A673 (cell line): ENCODE measurements at regions of chr20 and their contacts with region 1.

Region 1: DNA sequence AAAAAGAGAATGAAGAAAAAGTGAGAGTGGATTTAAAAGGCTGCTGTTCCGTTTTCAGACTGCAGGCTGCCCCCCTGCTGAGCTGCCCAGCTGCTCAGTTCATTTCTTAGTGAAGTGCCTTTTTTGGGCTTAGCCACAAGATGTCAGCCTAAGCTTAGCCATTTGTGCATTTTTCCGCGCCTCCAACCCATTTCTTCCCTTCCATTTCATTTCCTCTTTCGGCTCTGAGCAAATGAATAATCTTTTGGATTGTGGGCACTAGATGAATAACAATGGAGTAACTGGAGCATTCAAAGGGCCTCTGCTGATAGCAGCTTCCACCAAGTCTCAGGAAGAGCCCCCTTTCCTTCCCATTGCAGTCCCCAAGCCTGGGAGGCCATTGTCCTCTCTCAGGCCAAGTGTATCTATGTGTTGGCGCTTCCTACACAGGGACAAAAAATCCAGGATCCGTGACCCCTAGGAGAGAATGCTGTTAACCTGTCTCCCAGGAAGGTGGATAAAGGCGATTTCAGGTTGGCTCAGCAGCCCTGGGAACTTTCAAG is 83.5 kb upstream of the SPTLC3 start:
- DNase-seq: peak; percentile 88
- H3K4me3 ChIP-seq: no peak overlapping the region
- H3K27ac ChIP-seq: no peak overlapping the region
- H3K4me1 ChIP-seq: peaks cover 4% of the 10 kb centered on the region
- H3K27me3 ChIP-seq: no peaks in the 10 kb centered on the region
- CTCF ChIP-seq: peak; percentile 87

Region 2: GRCh38 chr20:12970372-12970821 is 45.1 kb after region 1 on chr20:
- CTCF ChIA-PET with region 1: interaction called, 3 read pairs
- POLR2A ChIA-PET with region 1: no interaction called
- intact Hi-C with region 1: loop called (anchors 2 kb)
- DNase-seq: peak; percentile 50
- H3K4me3 ChIP-seq: no peak overlapping the region
- H3K27ac ChIP-seq: no peak overlapping the region
- H3K4me1 ChIP-seq: no peaks in the 10 kb centered on the region
- H3K27me3 ChIP-seq: no peaks in the 10 kb centered on the region
- CTCF ChIP-seq: peak; percentile 58

Region 3: DNA sequence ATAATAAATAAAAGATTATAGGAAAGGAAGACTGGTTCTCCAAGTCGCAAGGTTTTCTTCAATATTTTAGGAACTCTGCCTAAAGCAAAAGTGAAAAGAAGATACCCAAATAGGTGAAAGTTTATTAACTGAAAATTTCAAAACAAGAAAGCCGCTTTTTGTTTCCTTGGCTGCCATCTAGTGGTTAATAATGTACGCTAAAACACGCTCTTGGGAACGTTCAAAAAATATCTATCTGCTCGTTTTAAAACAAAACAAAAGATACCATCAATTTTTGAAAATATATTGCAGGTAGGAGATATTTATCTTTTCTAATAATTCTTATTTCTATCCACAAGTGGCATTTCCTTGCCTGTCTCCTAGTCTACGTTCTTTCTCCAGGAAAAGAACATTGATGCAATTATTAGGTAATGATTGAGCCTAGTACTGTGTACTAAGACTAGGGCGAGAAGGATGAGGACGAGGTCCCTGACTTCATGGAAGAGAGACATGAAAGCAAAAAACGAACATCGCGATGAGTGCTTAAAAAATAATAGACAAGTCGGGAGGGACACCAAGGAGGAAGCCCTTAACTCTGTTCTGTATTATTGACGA is 180.7 kb after region 1 on chr20:
- CTCF ChIA-PET with region 1: no interaction called
- POLR2A ChIA-PET with region 1: no interaction called
- intact Hi-C with region 1: loop called (anchors 1 kb)
- DNase-seq: peak; percentile 56
- H3K4me3 ChIP-seq: no peak overlapping the region
- H3K27ac ChIP-seq: no peak overlapping the region
- H3K4me1 ChIP-seq: peaks cover 10% of the 10 kb centered on the region
- H3K27me3 ChIP-seq: no peaks in the 10 kb centered on the region
- CTCF ChIP-seq: peak; percentile 78

Region 4: GRCh38 chr20:13325033-13325432 is 399.7 kb after region 1 on chr20:
- CTCF ChIA-PET with region 1: no interaction called
- POLR2A ChIA-PET with region 1: no interaction called
- intact Hi-C with region 1: no loop called
- DNase-seq: peak; percentile 67
- H3K4me3 ChIP-seq: no peak overlapping the region
- H3K27ac ChIP-seq: no peak overlapping the region
- H3K4me1 ChIP-seq: no peaks in the 10 kb centered on the region
- H3K27me3 ChIP-seq: no peaks in the 10 kb centered on the region
- CTCF ChIP-seq: peak; percentile 66

Region 5: DNA sequence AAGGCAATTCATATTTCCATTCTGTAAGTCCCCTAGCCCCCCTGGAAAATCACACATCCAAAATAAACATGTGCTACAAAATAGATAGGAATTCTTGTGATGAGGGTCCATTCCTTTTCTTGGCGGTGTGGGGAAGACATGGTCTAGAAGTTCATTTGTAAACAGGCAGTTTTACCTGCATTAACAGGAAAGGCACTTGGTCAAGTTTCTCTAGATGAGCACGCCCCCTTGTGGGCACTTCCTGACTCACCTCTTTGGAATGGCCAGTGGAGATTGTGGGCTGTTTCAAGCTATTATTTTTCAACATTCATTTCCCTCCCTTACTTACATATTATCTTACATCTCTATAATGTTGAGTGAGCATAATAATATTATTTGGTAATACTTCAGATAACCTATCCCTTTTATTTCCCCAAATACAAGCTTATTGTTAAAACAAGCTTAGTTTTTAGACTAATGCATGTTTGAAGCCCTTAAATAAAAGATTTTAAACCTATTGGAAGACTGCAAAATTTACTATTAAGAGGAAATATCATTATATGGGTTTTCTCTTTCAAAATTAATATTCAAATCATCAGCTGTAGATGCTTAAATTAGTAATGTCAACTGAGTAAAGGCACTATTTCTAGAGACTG is 621.3 kb after region 1 on chr20:
- CTCF ChIA-PET with region 1: interaction called, 3 read pairs
- POLR2A ChIA-PET with region 1: no interaction called
- intact Hi-C with region 1: loop called (anchors 5 kb)
- DNase-seq: peak; percentile 81
- H3K4me3 ChIP-seq: no peak overlapping the region
- H3K27ac ChIP-seq: no peak overlapping the region
- H3K4me1 ChIP-seq: peaks cover 16% of the 10 kb centered on the region
- H3K27me3 ChIP-seq: no peaks in the 10 kb centered on the region
- CTCF ChIP-seq: peak; percentile 90

Region 6: DNA sequence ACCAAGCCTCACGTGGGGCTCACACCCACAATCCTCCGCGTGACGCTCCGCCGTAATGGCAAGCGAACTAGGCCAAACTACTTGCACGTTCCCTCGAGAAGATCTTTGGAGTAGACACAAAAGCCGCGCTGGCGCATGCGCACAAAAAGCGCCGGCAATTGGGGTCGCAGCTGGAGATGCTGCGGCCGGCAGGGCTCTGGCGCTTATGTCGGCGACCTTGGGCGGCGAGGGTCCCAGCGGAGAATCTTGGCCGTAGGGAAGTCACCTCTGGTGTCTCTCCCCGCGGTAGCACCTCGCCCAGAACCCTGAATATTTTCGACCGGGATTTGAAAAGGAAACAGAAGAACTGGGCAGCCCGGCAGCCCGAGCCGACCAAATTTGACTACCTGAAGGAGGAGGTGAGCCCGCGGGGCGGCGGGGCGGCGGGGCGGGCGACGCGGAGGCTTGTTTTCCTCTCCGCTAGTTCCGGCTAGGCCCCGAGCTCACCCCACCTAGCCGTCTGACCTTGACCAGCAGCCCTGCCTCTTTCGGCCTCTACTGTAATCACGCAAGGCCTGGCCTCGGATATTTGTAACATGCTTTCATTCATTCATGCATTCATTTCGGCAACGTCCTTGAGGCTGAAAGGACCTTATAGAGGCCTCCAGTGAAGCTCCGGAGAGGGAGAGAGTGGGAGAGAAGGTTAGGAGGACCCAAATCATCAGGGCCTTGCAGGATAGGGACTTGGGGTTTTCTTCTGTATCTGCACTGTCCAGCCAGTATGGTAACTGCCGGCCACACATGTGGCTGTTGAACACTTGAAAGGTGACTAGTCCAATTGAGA is 859.8 kb after region 1 on chr20 and contains the starts of genes ESF1 and NDUFAF5:
- CTCF ChIA-PET with region 1: interaction called, 4 read pairs
- POLR2A ChIA-PET with region 1: no interaction called
- intact Hi-C with region 1: loop called (anchors 1 kb)
- DNase-seq: peak; percentile 99
- H3K4me3 ChIP-seq: peak within 1 kb of the TSS; percentile 94
- H3K27ac ChIP-seq: peak within 1 kb of the TSS; percentile 81
- H3K4me1 ChIP-seq: peaks cover 7% of the 10 kb centered on the region
- H3K27me3 ChIP-seq: no peaks in the 10 kb centered on the region
- CTCF ChIP-seq: no peak
- total RNA-seq, gene ESF1: 29.4 and 34.7 TPM in 2 replicates
- total RNA-seq, gene NDUFAF5: 49.6 and 57.1 TPM in 2 replicates

Region 7: DNA sequence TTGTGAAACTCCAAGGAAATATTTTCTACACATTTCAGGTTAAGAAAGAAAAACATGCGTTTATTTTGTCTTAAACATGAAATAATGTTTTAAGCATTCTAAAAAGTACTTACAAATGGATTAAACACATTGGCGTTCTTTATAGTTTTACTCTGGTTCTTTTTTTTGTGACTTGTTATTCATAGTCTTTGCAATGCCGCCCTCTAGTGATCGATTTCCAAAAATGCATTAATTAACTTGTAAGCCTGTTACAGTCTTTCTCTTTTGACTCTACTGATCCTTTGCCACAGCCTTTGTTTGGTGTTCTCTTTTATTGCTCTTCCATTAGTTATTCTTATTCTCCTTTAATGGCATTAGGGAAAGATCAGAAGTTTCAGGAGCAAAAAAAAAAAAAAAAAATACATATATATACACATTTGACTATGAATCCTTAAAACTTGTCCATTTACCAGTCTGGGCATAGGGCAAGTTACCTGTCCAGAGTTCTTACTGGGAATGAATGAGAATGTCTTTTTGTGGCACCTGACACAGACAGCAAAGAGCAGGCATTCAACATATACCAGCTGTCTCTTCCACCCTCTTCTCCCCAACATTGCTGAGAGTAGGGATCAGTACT is 1130.0 kb after region 1 on chr20:
- CTCF ChIA-PET with region 1: no interaction called
- POLR2A ChIA-PET with region 1: no interaction called
- intact Hi-C with region 1: loop called (anchors 10 kb)
- DNase-seq: peak; percentile 73
- H3K4me3 ChIP-seq: no peak overlapping the region
- H3K27ac ChIP-seq: no peak overlapping the region
- H3K4me1 ChIP-seq: no peaks in the 10 kb centered on the region
- H3K27me3 ChIP-seq: no peaks in the 10 kb centered on the region
- CTCF ChIP-seq: peak; percentile 72